ENCODE measurements at regions of chr2 and their contacts with region 1.

Region 1: DNA sequence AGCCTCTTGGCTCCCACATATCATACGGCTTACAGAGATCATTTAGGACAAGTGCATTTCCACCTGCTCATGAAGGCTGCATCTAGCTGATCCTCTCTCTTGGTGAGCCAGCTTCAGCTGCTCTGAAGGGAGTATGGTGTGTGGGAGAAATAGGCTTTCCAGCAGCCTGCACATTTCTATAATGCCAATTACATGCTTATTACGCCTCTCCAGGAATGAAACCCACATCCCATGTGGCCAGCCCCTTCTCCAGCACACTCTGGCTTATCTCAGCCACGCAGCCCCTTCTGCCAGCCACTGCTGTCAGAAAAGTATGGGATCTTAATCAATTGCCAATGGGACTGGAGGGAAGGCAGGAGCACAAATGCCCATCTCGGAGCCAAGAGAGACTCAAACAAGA is 117.5 kb downstream of the GALNT14 start:
- DNase-seq: no peak
- ATAC-seq: no peak
- H3K4me3 ChIP-seq: no peak overlapping the region
- H3K4me3 Mint-ChIP-seq: no peak overlapping the region
- H3K27ac ChIP-seq: no peak overlapping the region
- H3K27ac Mint-ChIP-seq: no peak overlapping the region
- H3K4me1 ChIP-seq: no peaks in the 10 kb centered on the region
- H3K4me1 Mint-ChIP-seq: no peaks in the 10 kb centered on the region
- H3K27me3 ChIP-seq: no peaks in the 10 kb centered on the region
- H3K27me3 Mint-ChIP-seq: peaks cover 2% of the 10 kb centered on the region
- CTCF ChIP-seq: no peak

Region 2: GRCh38 chr2:31079665-31080064 is 59.0 kb after region 1 on chr2:
- CTCF ChIA-PET with region 1: no interaction called
- POLR2A ChIA-PET with region 1: no interaction called
- intact Hi-C with region 1: loop called in 1 of 2 experiments (anchors 10 kb)
- DNase-seq: no peak
- ATAC-seq: no peak
- H3K4me3 ChIP-seq: no peak overlapping the region
- H3K4me3 Mint-ChIP-seq: no peak overlapping the region
- H3K27ac ChIP-seq: no peak overlapping the region
- H3K27ac Mint-ChIP-seq: no peak overlapping the region
- H3K4me1 ChIP-seq: no peaks in the 10 kb centered on the region
- H3K4me1 Mint-ChIP-seq: no peaks in the 10 kb centered on the region
- H3K27me3 ChIP-seq: no peaks in the 10 kb centered on the region
- H3K27me3 Mint-ChIP-seq: no peaks in the 10 kb centered on the region
- CTCF ChIP-seq: no peak

Measured in CD8-positive, alpha-beta T cell (primary cell).